ENCODE measurements at regions of chr11 and their contacts with region 1.

Region 1: DNA sequence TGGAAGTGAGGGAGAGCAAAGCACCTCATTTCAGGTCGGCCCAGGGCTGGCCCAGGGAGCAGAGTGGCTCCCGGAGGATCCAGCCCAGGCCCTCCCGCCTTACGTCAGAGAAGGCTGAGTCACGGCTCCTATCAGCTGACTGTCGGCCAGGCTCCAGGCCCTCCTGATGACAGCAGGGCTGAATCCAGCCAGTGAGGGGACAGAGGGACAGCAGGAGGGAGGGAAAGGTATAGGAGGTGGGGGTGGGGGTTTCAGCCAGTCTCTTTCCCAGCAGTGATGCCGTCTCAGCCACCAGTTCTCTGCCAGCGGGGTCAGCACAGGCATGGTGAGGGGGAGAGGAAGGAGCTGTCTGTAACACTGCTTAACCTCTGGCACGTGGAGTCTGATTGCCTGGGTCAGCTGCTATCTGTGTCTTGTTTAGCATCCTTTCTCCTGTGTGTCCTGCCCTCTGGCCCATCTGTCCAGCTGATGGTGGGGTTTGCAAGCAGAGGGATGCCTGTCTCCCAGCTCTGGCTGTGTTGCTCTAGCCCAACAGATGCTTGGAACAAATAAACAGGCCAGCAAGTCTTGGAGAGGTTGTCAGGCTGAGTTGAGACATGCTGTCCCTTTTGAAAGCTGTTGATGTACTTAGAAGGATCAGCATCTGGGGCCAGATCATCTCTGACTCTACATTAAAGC is 74.0 kb downstream of the ADAMTS15 start:
- DNase-seq: peak; percentile 96
- ATAC-seq: peak; percentile 94

Region 2: GRCh38 chr11:130370845-130371590 is 151.4 kb before region 1 on chr11:
- intact Hi-C with region 1: no loop called
- DNase-seq: no peak
- ATAC-seq: no peak

Region 3: GRCh38 chr11:130478204-130478701 is 44.2 kb before region 1 on chr11:
- intact Hi-C with region 1: loop called (anchors 10 kb)
- DNase-seq: peak; percentile 87
- ATAC-seq: peak; percentile 81

Region 4: GRCh38 chr11:131195661-131196517 is 673.5 kb after region 1 on chr11:
- intact Hi-C with region 1: no loop called
- DNase-seq: peak; percentile 70
- ATAC-seq: peak; percentile 86

Region 5: DNA sequence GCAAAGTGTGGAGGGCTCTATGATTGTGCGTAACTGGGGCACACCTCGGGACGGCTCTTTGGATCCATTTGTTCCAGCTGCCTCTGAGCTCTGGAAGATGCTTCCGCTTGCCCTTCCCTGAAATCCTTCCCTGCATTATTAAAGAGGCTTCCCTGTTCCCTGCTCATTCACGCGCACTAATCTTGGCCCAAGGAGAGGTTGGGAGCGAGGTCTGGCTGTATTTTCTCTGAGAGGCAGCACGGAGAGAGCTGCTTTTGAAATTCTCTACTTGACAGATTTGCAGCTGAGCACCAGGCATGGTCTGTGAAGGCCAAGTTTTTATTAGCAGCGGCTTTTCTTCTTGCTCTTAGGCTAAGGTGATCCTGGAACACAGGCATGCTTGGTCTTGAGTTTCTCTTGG is 753.2 kb after region 1 on chr11:
- intact Hi-C with region 1: no loop called
- DNase-seq: no peak
- ATAC-seq: no peak

Measured in left ventricle myocardium superior (tissue), 1 donor.